ENCODE measurements at regions of chr1 and their contacts with region 1.

Region 1: GRCh38 chr1:110787328-110788071 is 85.4 kb upstream of the CD53 start:
- DNase-seq: peak; percentile 73
- ATAC-seq: peak; percentile 73
- H3K4me3 Mint-ChIP-seq: peak overlapping the region; percentile 35
- H3K27ac Mint-ChIP-seq: peak overlapping the region; percentile 84
- H3K4me1 Mint-ChIP-seq: peaks cover 51% of the 10 kb centered on the region
- H3K27me3 Mint-ChIP-seq: no peaks in the 10 kb centered on the region
- CTCF ChIP-seq: no peak

Region 2: GRCh38 chr1:110722807-110723206 is 64.7 kb before region 1 on chr1:
- CTCF ChIA-PET with region 1: no interaction called
- POLR2A ChIA-PET with region 1: no interaction called
- intact Hi-C with region 1: no loop called
- DNase-seq: no peak
- ATAC-seq: no peak
- H3K4me3 Mint-ChIP-seq: no peak overlapping the region
- H3K27ac Mint-ChIP-seq: no peak overlapping the region
- H3K4me1 Mint-ChIP-seq: peaks cover 20% of the 10 kb centered on the region
- H3K27me3 Mint-ChIP-seq: no peaks in the 10 kb centered on the region
- CTCF ChIP-seq: no peak

Region 3: DNA sequence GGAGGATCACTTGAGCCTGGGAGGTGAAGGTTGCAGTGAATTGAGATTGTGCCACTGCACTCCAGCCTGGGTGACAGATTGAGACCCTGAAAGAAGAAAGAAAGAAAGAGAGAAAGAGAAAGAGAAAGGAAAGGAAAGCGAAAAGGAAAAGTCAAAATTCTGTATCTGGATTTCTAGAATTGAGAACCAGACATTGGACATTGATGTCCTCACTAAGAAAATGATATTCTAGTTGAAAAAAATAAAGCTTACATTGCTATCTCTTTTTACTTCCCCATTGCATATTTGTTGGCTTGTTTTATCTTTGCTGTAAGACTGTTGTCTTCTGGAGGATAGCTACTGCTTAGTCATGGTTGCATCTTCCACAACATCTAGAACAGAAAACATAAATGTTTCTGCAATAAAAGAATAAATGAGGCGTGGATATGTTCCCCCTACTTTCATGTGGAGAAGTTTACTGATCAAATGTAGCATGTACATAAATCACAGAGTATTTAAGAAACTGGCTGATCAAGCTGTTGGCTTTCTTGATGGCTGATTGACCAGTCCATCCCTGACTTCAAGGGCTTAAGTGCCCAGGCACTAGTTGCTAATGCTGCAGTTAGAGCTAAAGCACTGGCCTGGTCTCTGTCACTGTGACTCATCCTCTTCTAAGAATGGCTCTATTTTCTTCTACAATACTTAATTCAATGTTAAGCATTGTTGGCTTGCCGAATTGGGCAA is 103.1 kb after region 1 on chr1:
- CTCF ChIA-PET with region 1: interaction called, 10 read pairs
- POLR2A ChIA-PET with region 1: no interaction called
- intact Hi-C with region 1: no loop called
- DNase-seq: no peak
- ATAC-seq: peak; percentile 50
- H3K4me3 Mint-ChIP-seq: peak overlapping the region; percentile 41
- H3K27ac Mint-ChIP-seq: peak overlapping the region; percentile 81
- H3K4me1 Mint-ChIP-seq: peaks cover 91% of the 10 kb centered on the region
- H3K27me3 Mint-ChIP-seq: no peaks in the 10 kb centered on the region
- CTCF ChIP-seq: no peak

Region 4: DNA sequence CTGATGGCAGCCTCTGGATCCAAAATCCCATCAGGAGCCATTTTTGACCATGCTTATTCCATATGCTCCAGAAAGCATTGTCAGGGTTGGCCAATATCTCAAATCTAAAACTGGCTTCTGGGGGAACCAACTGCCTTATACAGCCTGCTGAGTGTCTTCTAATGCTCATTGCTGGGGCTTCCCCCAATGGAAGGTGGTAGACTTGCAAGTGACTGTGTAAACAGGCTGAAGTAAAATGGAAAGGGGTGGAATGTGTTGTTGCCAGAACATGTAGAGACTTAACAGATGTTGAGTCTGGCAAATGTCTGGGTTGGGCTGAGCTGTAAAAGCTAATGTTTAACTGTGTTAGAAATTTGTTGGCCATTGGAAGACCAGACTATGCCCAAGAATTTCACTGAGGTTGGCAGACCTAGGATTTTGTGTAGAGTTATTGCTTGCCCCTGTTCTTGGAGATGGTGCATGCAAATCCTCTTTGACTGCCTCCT is 198.9 kb after region 1 on chr1:
- CTCF ChIA-PET with region 1: interaction called, 27 read pairs
- POLR2A ChIA-PET with region 1: no interaction called
- intact Hi-C with region 1: loop called (anchors 5 kb)
- DNase-seq: no peak
- ATAC-seq: no peak
- H3K4me3 Mint-ChIP-seq: no peak overlapping the region
- H3K27ac Mint-ChIP-seq: no peak overlapping the region
- H3K4me1 Mint-ChIP-seq: peaks cover 11% of the 10 kb centered on the region
- H3K27me3 Mint-ChIP-seq: peaks cover 4% of the 10 kb centered on the region
- CTCF ChIP-seq: no peak

Region 5: DNA sequence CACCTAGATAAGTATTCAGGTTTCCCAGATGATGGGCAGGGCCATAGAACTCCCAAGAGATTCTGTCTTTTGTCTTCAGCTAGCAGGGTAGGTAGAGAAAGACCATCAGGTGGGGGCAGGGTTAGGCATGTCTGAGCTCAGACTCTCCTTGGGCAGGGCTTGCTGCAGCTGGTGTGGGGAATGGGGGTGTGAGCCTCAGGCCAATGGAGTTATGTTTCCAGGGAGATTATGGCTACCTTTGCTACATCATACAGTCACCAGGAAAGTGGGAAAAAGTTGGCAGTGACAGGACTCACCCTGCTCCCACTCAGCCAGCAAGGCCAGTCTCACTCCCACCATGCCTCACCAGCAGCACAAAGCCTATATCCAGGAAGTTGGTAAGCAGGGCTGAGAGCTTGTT is 274.6 kb after region 1 on chr1:
- CTCF ChIA-PET with region 1: no interaction called
- POLR2A ChIA-PET with region 1: no interaction called
- intact Hi-C with region 1: no loop called
- DNase-seq: no peak
- ATAC-seq: no peak
- H3K4me3 Mint-ChIP-seq: no peak overlapping the region
- H3K27ac Mint-ChIP-seq: no peak overlapping the region
- H3K4me1 Mint-ChIP-seq: no peaks in the 10 kb centered on the region
- H3K27me3 Mint-ChIP-seq: peaks cover 9% of the 10 kb centered on the region
- CTCF ChIP-seq: no peak

Measured in activated CD8-positive, alpha-beta T cell treated with anti-CD3 and anti-CD28 coated beads for 36 hours (primary cell).